CD4-positive, alpha-beta T cell (primary cell): ENCODE measurements at regions of chr12 and their contacts with region 1.

Region 1: DNA sequence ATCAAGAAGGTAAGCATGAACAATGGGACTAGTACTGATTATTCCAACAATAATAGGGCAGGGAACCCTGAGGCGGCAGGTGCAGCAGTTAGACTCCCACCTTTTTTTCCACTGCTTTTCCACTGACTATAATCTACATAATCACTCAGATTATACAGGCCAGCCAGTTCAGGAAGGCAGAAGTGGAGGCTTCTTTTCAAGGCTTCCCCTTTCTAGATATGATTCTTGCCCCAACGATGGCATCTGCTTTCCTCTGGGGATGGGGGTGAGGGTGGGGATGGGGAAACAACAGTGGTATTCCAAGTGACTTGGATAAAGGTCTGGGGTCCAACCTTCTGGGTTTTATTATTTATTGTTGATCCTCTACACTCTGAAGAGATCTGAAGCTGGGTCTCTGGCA is 331 bp downstream of the NCKAP1L start:
- DNase-seq: no peak
- ATAC-seq: peak; percentile 1
- H3K4me3 ChIP-seq: peak overlapping the region; percentile 70
- H3K4me3 Mint-ChIP-seq: peak overlapping the region; percentile 97
- H3K27ac ChIP-seq: peak overlapping the region; percentile 46 to 65
- H3K27ac Mint-ChIP-seq: peak overlapping the region; percentile 92
- H3K4me1 ChIP-seq: peaks cover 31% of the 10 kb centered on the region
- H3K4me1 Mint-ChIP-seq: peaks cover 53% of the 10 kb centered on the region
- H3K27me3 ChIP-seq: no peaks in the 10 kb centered on the region
- H3K27me3 Mint-ChIP-seq: no peaks in the 10 kb centered on the region
- CTCF ChIP-seq: peak; percentile 8

Region 2: GRCh38 chr12:54404061-54405004 is 93.5 kb before region 1 on chr12:
- CTCF ChIA-PET with region 1: interaction called, 9 read pairs
- POLR2A ChIA-PET with region 1: interaction called, 6 read pairs
- intact Hi-C with region 1: loop called in 1 of 2 experiments (anchors 5 kb)
- DNase-seq: peak; percentile 55 to 85 (median 64)
- ATAC-seq: peak; percentile 68
- H3K4me3 ChIP-seq: no peak overlapping the region
- H3K4me3 Mint-ChIP-seq: no peak overlapping the region
- H3K27ac ChIP-seq: peak overlapping the region; percentile 29 to 52
- H3K27ac Mint-ChIP-seq: peak overlapping the region; percentile 86
- H3K4me1 ChIP-seq: peaks cover 46% of the 10 kb centered on the region
- H3K4me1 Mint-ChIP-seq: peaks cover 50% of the 10 kb centered on the region
- H3K27me3 ChIP-seq: no peaks in the 10 kb centered on the region
- H3K27me3 Mint-ChIP-seq: no peaks in the 10 kb centered on the region
- CTCF ChIP-seq: peak; percentile 99

Region 3: GRCh38 chr12:54419088-54419892 is 78.6 kb before region 1 on chr12 and contains the start of gene ITGA5:
- CTCF ChIA-PET with region 1: no interaction called
- POLR2A ChIA-PET with region 1: no interaction called
- intact Hi-C with region 1: loop called in 1 of 2 experiments (anchors 5 kb)
- DNase-seq: peak in 8 of 14 experiments; percentile 25 to 72 (median 55)
- ATAC-seq: peak; percentile 25
- H3K4me3 ChIP-seq: peak within 1 kb of the TSS; percentile 98
- H3K4me3 Mint-ChIP-seq: peak within 1 kb of the TSS; percentile 94
- H3K27ac ChIP-seq: peak within 1 kb of the TSS; percentile 90 to 94
- H3K27ac Mint-ChIP-seq: peak within 1 kb of the TSS; percentile 95
- H3K4me1 ChIP-seq: peaks cover 55% of the 10 kb centered on the region
- H3K4me1 Mint-ChIP-seq: peaks cover 54% of the 10 kb centered on the region
- H3K27me3 ChIP-seq: no peaks in the 10 kb centered on the region
- H3K27me3 Mint-ChIP-seq: no peaks in the 10 kb centered on the region
- CTCF ChIP-seq: no peak
- total RNA-seq, gene ITGA5: 143 to 159 TPM

Region 4: GRCh38 chr12:54560374-54560858 is 62.5 kb after region 1 on chr12:
- CTCF ChIA-PET with region 1: no interaction called
- POLR2A ChIA-PET with region 1: interaction called, 14 read pairs
- intact Hi-C with region 1: no loop called
- DNase-seq: peak; percentile 73 to 95 (median 83)
- ATAC-seq: peak; percentile 100
- H3K4me3 ChIP-seq: peak overlapping the region; percentile 61
- H3K4me3 Mint-ChIP-seq: peak overlapping the region; percentile 82
- H3K27ac ChIP-seq: peak overlapping the region; percentile 32 to 38
- H3K27ac Mint-ChIP-seq: peak overlapping the region; percentile 46
- H3K4me1 ChIP-seq: peaks cover 19% of the 10 kb centered on the region
- H3K4me1 Mint-ChIP-seq: peaks cover 39% of the 10 kb centered on the region
- H3K27me3 ChIP-seq: no peaks in the 10 kb centered on the region
- H3K27me3 Mint-ChIP-seq: no peaks in the 10 kb centered on the region
- CTCF ChIP-seq: no peak

Region 5: GRCh38 chr12:54958048-54958658 is 460.3 kb after region 1 on chr12:
- CTCF ChIA-PET with region 1: no interaction called
- POLR2A ChIA-PET with region 1: no interaction called
- intact Hi-C with region 1: no loop called
- DNase-seq: peak in 11 of 14 experiments; percentile 23 to 81 (median 44)
- ATAC-seq: peak; percentile 64
- H3K4me3 ChIP-seq: no peak overlapping the region
- H3K4me3 Mint-ChIP-seq: peak overlapping the region; percentile 0
- H3K27ac ChIP-seq: no peak overlapping the region
- H3K27ac Mint-ChIP-seq: peak overlapping the region; percentile 56
- H3K4me1 ChIP-seq: peaks cover 52% of the 10 kb centered on the region
- H3K4me1 Mint-ChIP-seq: peaks cover 91% of the 10 kb centered on the region
- H3K27me3 ChIP-seq: no peaks in the 10 kb centered on the region
- H3K27me3 Mint-ChIP-seq: no peaks in the 10 kb centered on the region
- CTCF ChIP-seq: peak; percentile 77